ENCODE measurements at regions of chr3 and their contacts with region 1.

Region 1: GRCh38 chr3:45841757-45842491 is at the start of gene LZTFL1:
- DNase-seq: peak; percentile 80
- ATAC-seq: peak; percentile 88
- H3K4me3 Mint-ChIP-seq: peak within 1 kb of the TSS; percentile 97
- H3K27ac Mint-ChIP-seq: peak within 1 kb of the TSS; percentile 93
- H3K4me1 Mint-ChIP-seq: peaks cover 25% of the 10 kb centered on the region
- H3K27me3 Mint-ChIP-seq: peaks cover 2% of the 10 kb centered on the region
- CTCF ChIP-seq: no peak
- total RNA-seq, gene LZTFL1: 10.8 and 12.6 TPM in 2 replicates

Region 2: DNA sequence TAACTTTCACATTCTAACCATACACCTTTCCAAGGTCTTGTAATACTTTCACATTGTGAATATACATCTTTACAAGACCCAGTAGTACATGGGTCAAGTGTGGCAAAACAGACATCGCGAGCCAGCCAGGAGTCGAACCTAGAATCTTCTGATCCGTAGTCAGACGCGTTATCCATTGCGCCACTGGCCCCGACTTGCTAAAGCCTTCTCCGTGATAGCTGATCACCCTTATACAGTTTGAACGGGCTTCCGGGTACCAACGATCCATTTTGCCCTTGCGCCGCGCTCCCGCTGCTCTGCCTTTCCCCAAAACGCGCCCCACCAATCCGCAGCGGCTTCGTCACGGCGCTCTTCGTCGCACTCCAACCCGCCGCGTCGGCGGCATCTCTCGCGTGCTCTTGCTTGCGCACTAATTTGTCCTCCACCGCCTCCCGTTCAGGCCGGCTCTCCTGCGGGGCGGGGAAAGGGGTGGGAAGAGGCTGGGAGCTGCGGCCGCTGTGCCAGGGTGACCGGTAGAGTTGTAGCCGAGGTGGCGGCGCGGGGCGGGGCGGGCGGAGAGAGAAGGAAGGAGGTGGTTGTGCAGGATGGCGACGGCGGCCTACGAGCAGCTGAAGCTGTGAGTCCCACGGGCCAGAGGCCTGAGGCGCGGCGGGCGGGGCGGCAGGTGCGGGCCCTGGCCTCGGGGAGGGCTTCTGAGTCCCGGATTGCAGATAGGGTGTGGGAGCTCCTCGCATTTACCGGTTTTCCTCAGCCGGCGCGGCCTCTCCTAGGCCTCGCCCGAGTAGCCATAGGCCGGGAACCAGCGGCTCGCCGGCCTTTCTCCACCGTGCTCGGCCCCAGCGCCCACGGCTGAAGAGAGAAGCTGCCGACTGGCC is 152.8 kb before region 1 on chr3 and contains the start of gene SACM1L:
- CTCF ChIA-PET with region 1: no interaction called
- POLR2A ChIA-PET with region 1: no interaction called
- intact Hi-C with region 1: loop called (anchors 1 kb)
- DNase-seq: peak; percentile 90
- ATAC-seq: peak; percentile 88
- H3K4me3 Mint-ChIP-seq: peak within 1 kb of the TSS; percentile 88
- H3K27ac Mint-ChIP-seq: peak within 1 kb of the TSS; percentile 98
- H3K4me1 Mint-ChIP-seq: peaks cover 61% of the 10 kb centered on the region
- H3K27me3 Mint-ChIP-seq: peaks cover 3% of the 10 kb centered on the region
- CTCF ChIP-seq: no peak
- total RNA-seq, gene SACM1L: 43.1 and 55.5 TPM in 2 replicates

Region 3: DNA sequence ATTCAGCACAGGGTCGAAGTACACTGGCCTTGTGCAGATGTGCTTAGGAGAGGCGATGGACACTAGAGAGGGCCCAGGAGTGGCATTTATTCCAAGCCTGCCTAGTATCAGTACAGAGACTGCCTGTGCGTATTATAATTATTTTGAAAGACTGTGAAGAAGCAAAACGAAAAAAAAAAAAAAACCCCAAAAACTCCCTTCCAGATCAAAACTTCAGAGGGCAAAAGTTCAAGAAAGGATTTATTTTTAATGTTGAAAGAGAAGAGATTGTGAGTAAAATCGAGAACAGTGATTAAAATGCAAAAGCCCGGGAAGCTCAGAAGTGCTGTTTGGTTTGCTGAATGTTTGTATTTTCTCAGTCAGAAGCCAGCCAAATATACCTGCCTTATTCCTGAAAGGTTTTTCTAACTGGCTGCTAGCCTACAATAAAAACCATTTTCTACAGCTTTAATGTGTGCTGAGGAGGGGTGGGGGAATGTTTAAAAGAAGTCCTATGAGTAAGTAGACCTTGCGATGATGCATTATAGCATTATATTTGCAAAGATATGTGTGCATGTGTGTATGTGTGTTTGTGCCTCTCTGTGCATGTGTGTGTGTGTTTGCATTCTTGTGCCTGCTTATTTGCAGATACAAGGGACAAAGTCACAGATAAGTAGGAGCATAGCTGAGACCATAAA is 19.3 kb after region 1 on chr3:
- CTCF ChIA-PET with region 1: interaction called, 3 read pairs
- POLR2A ChIA-PET with region 1: interaction called, 3 read pairs
- intact Hi-C with region 1: loop called (anchors 2 kb)
- DNase-seq: no peak
- ATAC-seq: peak; percentile 26
- H3K4me3 Mint-ChIP-seq: peak overlapping the region; percentile 20
- H3K27ac Mint-ChIP-seq: peak overlapping the region; percentile 41
- H3K4me1 Mint-ChIP-seq: peaks cover 46% of the 10 kb centered on the region
- H3K27me3 Mint-ChIP-seq: no peaks in the 10 kb centered on the region
- CTCF ChIP-seq: no peak

Region 4: GRCh38 chr3:45890405-45890804 is 48.5 kb after region 1 on chr3:
- CTCF ChIA-PET with region 1: interaction called, 3 read pairs
- POLR2A ChIA-PET with region 1: interaction called, 3 read pairs
- intact Hi-C with region 1: loop called (anchors 5 kb)
- DNase-seq: no peak
- ATAC-seq: no peak
- H3K4me3 Mint-ChIP-seq: peak overlapping the region; percentile 25
- H3K27ac Mint-ChIP-seq: peak overlapping the region; percentile 54
- H3K4me1 Mint-ChIP-seq: peaks cover 70% of the 10 kb centered on the region
- H3K27me3 Mint-ChIP-seq: no peaks in the 10 kb centered on the region
- CTCF ChIP-seq: no peak

Region 5: DNA sequence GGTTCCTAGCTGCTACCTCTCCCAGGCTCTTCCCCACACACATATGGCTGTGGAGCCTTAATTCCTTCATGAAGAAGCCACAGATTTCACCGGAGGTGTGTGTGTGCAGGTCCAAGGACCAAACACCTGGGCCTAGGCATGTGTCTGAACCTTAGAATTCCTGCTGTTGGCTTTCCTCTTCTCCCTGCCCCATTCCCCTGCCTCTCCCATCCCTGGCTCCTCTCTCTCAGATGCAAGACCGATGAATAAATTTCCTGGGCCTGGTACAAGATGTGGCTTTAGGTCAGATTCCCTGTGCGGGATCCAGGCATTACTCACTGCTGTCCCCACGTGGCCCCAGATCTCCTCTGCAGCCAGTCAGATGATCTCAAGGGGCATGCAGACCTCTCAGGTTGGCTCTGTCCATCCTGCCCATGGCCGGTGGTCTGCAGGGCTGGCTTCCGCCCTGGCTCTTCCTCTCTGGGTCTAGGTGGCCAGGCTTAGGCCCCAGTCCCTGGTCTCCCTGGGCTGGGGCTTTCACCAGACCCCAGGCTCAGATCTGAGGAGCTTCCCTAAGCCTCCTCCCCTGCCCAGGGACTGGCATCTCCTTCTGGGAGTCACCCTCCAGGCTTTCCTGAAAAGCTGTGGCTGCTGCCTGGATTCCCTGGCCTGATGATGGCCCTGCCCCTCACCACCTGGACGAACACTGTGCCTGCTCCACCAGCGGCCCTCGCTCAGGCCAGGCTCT is 64.9 kb after region 1 on chr3:
- CTCF ChIA-PET with region 1: interaction called, 3 read pairs
- POLR2A ChIA-PET with region 1: interaction called, 8 read pairs
- intact Hi-C with region 1: loop called (anchors 5 kb)
- DNase-seq: no peak
- ATAC-seq: no peak
- H3K4me3 Mint-ChIP-seq: no peak overlapping the region
- H3K27ac Mint-ChIP-seq: no peak overlapping the region
- H3K4me1 Mint-ChIP-seq: peaks cover 48% of the 10 kb centered on the region
- H3K27me3 Mint-ChIP-seq: no peaks in the 10 kb centered on the region
- CTCF ChIP-seq: no peak

Region 6: GRCh38 chr3:45929042-45929679 is 87.2 kb after region 1 on chr3:
- CTCF ChIA-PET with region 1: interaction called, 5 read pairs
- POLR2A ChIA-PET with region 1: no interaction called
- intact Hi-C with region 1: loop called (anchors 1 kb)
- DNase-seq: peak; percentile 54
- ATAC-seq: peak; percentile 92
- H3K4me3 Mint-ChIP-seq: no peak overlapping the region
- H3K27ac Mint-ChIP-seq: no peak overlapping the region
- H3K4me1 Mint-ChIP-seq: no peaks in the 10 kb centered on the region
- H3K27me3 Mint-ChIP-seq: no peaks in the 10 kb centered on the region
- CTCF ChIP-seq: no peak

Region 7: GRCh38 chr3:45995236-45996192 is 153.6 kb after region 1 on chr3 and contains the start of gene FYCO1:
- CTCF ChIA-PET with region 1: no interaction called
- POLR2A ChIA-PET with region 1: interaction called, 3 read pairs
- intact Hi-C with region 1: loop called (anchors 5 kb)
- DNase-seq: peak; percentile 82
- ATAC-seq: peak; percentile 97
- H3K4me3 Mint-ChIP-seq: peak within 1 kb of the TSS; percentile 89
- H3K27ac Mint-ChIP-seq: peak within 1 kb of the TSS; percentile 89
- H3K4me1 Mint-ChIP-seq: peaks cover 41% of the 10 kb centered on the region
- H3K27me3 Mint-ChIP-seq: no peaks in the 10 kb centered on the region
- CTCF ChIP-seq: no peak
- total RNA-seq, gene FYCO1: 10.6 and 14.9 TPM in 2 replicates